Gastrocnemius medialis (tissue), 4 donors: ENCODE measurements at regions of chr7 and their contacts with region 1.

Region 1: DNA sequence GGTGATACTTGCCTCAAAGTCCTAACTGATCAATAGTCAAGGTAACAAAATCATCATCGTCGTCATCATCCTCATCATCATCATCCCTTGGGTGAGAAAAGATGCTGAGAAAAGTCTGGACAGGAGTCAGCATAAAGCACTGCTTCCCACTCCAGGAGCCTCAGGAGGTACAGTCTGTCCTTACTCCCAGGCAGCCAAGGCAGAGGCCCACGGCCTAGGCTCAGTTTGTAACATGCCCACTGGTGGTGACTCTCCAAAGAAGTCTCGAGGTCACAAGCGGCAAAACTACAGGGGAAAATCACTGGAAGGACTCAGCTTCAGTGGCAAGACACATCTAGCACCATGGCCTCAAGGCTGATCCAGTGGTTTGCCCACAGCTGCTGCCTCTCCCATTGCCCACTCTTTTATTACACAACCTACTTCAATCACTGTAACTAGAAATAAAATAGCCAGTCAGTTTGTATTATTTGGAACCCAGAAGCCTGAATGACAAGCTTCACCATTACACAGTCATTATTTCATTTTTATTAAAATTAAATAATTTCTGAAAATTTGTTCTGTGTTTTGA is 150.4 kb downstream of the SRPK2 start:
- DNase-seq: no peak
- ATAC-seq: peak; percentile 36 to 49
- H3K4me3 ChIP-seq: no peak overlapping the region
- H3K27ac ChIP-seq: peak overlapping the region in 1 of 4 donors; percentile 28
- H3K4me1 ChIP-seq: peaks cover 38 to 48% of the 10 kb centered on the region in 2 donors
- H3K27me3 ChIP-seq: no peaks in the 10 kb centered on the region
- CTCF ChIP-seq: no peak
- POLR2A ChIP-seq: no peak

Region 2: DNA sequence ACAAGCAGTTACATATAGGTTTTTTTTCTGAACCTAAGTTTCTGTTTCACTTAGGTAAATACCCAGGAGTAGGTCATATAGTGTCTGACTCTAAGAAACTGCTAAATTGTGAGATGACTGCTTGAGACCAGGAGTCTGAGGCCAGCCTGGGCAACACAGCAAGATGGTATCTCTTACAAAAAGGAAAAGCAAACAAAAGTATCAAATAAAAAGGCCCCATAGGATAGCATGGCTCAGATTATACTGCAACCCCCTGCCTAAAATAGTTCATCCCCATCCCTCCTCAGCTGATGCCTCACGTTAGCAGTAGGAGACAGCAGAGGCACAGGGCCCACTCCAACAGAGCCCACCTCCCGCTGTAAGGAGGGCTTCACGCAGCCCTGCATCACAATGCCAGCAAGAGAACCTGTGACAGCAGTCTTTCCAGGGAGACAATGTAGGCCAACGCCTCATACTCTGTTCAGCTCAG is 60.2 kb after region 1 on chr7:
- in situ Hi-C with region 1: no loop called
- intact Hi-C with region 1: loop called (anchors 5 kb)
- DNase-seq: no peak
- ATAC-seq: no peak
- H3K4me3 ChIP-seq: no peak overlapping the region
- H3K27ac ChIP-seq: no peak overlapping the region
- H3K4me1 ChIP-seq: peaks cover 14 to 18% of the 10 kb centered on the region in 2 donors
- H3K27me3 ChIP-seq: no peaks in the 10 kb centered on the region
- CTCF ChIP-seq: no peak
- POLR2A ChIP-seq: no peak

Region 3: GRCh38 chr7:105365541-105366534 is 127.6 kb after region 1 on chr7:
- in situ Hi-C with region 1: no loop called
- intact Hi-C with region 1: no loop called
- DNase-seq: no peak
- ATAC-seq: no peak
- H3K4me3 ChIP-seq: no peak overlapping the region
- H3K27ac ChIP-seq: no peak overlapping the region
- H3K4me1 ChIP-seq: no peaks in the 10 kb centered on the region
- H3K27me3 ChIP-seq: no peaks in the 10 kb centered on the region
- CTCF ChIP-seq: no peak
- POLR2A ChIP-seq: no peak

Region 4: GRCh38 chr7:105462765-105463420 is 224.6 kb after region 1 on chr7:
- in situ Hi-C with region 1: no loop called
- intact Hi-C with region 1: no loop called
- DNase-seq: no peak
- ATAC-seq: no peak
- H3K4me3 ChIP-seq: no peak overlapping the region
- H3K27ac ChIP-seq: no peak overlapping the region
- H3K4me1 ChIP-seq: peaks cover 0 to 13% of the 10 kb centered on the region in 2 donors
- H3K27me3 ChIP-seq: no peaks in the 10 kb centered on the region
- CTCF ChIP-seq: no peak
- POLR2A ChIP-seq: no peak

Region 5: GRCh38 chr7:105522062-105522936 is 284.0 kb after region 1 on chr7 and contains the start of gene PUS7:
- in situ Hi-C with region 1: no loop called
- intact Hi-C with region 1: no loop called
- DNase-seq: peak; percentile 72 to 83
- ATAC-seq: peak; percentile 93 to 95
- H3K4me3 ChIP-seq: peak within 1 kb of the TSS; percentile 56 to 87 (median 64)
- H3K27ac ChIP-seq: peak within 1 kb of the TSS; percentile 82 to 96 (median 86)
- H3K4me1 ChIP-seq: peaks cover 12 to 15% of the 10 kb centered on the region in 2 donors
- H3K27me3 ChIP-seq: no peaks in the 10 kb centered on the region
- CTCF ChIP-seq: peak in 2 of 5 experiments; percentile 16 to 26
- POLR2A ChIP-seq: peak; percentile 90 to 91
- total RNA-seq, gene PUS7: 13.4 to 66.2 (median 17.8) TPM